ENCODE measurements at regions of chr21 and their contacts with region 1.

Region 1: DNA sequence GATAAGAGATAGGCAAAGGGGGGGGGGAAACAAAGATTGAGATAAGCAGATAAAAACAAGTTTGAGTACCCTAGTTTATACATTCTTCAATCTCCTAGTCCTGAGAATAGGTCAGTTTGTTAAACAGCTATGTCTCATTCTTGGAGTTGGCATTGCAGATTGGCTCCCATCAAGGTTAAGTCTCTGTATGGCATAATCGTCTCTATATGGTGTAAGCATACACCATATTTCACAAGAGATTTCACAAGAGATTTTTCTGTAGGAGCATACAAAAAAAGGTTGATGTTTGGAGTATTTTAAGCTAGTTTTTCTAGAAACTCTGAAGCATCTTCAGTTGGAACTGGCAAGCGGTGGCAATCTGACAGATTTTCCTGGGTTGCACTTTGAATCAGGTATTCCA is 35.8 kb downstream of the NCAM2 start:
- DNase-seq: no peak
- ATAC-seq: no peak
- H3K4me3 ChIP-seq: no peak overlapping the region
- H3K27ac ChIP-seq: no peak overlapping the region
- H3K4me1 ChIP-seq: no peaks in the 10 kb centered on the region
- H3K27me3 ChIP-seq: no peaks in the 10 kb centered on the region
- CTCF ChIP-seq: no peak
- EP300 ChIP-seq: no peak
- POLR2A ChIP-seq: no peak
- RAD21 ChIP-seq: no peak

Region 2: DNA sequence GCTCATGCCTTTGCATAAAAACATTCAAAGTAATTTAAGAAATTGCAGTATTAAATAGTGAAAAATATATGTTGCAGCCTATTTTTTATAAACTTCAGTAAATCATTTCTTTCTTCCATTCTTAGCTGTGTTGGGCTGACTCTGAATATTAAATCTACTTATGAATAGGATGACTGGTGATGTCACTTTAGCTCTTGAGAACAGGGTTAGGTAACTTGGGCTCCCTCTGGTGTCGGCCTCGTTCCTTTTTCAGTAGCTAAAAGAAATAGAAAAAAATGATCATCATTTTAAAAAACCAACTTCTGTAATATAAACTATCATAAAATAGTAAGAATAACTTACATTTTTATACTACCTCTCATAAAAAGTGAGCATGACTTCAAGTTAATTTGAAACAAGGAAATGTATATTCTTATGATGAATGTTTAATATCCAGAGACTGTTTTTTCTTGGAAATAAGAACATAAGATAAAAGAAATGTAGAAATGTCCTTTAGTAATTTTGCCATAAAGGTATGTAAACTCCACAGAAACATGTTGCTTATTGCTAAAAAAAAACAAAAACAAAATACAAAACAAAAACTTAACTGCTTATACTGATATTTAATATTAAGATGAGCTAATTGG is 62.6 kb before region 1 on chr21:
- CTCF ChIA-PET with region 1: no interaction called
- POLR2A ChIA-PET with region 1: no interaction called
- RAD21 ChIA-PET with region 1: no interaction called
- SMC1A ChIA-PET with region 1: no interaction called
- in situ Hi-C with region 1: loop called (anchors 10 kb)
- intact Hi-C with region 1: no loop called
- DNase-seq: no peak
- ATAC-seq: no peak
- H3K4me3 ChIP-seq: no peak overlapping the region
- H3K27ac ChIP-seq: no peak overlapping the region
- H3K4me1 ChIP-seq: no peaks in the 10 kb centered on the region
- H3K27me3 ChIP-seq: no peaks in the 10 kb centered on the region
- CTCF ChIP-seq: peak in 1 of 3 experiments; percentile 21; a peak in 1 of 6 replicates
- EP300 ChIP-seq: no peak
- POLR2A ChIP-seq: no peak
- RAD21 ChIP-seq: no peak

Region 3: GRCh38 chr21:21018821-21019220 is 15.2 kb before region 1 on chr21:
- CTCF ChIA-PET with region 1: no interaction called
- POLR2A ChIA-PET with region 1: no interaction called
- RAD21 ChIA-PET with region 1: no interaction called
- SMC1A ChIA-PET with region 1: no interaction called
- in situ Hi-C with region 1: no loop called
- intact Hi-C with region 1: no loop called
- DNase-seq: no peak
- ATAC-seq: no peak
- H3K4me3 ChIP-seq: no peak overlapping the region
- H3K27ac ChIP-seq: no peak overlapping the region
- H3K4me1 ChIP-seq: no peaks in the 10 kb centered on the region
- H3K27me3 ChIP-seq: no peaks in the 10 kb centered on the region
- CTCF ChIP-seq: no peak
- EP300 ChIP-seq: no peak
- POLR2A ChIP-seq: no peak
- RAD21 ChIP-seq: no peak

Measured in GM12878 (cell line).